Naive thymus-derived CD8-positive, alpha-beta T cell (primary cell): ENCODE measurements at regions of chr1 and their contacts with region 1.

Region 1: GRCh38 chr1:13730751-13731482 is 30.9 kb downstream of the PRDM2 start:
- DNase-seq: peak; percentile 65 to 95 (median 86)
- ATAC-seq: peak; percentile 85 to 90
- H3K4me3 Mint-ChIP-seq: peak overlapping the region; percentile 67 to 93 (median 86)
- H3K27ac Mint-ChIP-seq: peak overlapping the region; percentile 97 to 100 (median 99)
- H3K4me1 Mint-ChIP-seq: peaks cover 46 to 99% (median 92%) of the 10 kb centered on the region in 4 donors
- H3K27me3 Mint-ChIP-seq: no peaks in the 10 kb centered on the region

Region 2: GRCh38 chr1:13699936-13700520 is 30.9 kb before region 1 on chr1 and contains the start of gene PRDM2:
- POLR2A ChIA-PET with region 1: interaction called, 74 read pairs
- DNase-seq: peak; percentile 47 to 79 (median 68)
- ATAC-seq: peak; percentile 40 to 58
- H3K4me3 Mint-ChIP-seq: peak within 1 kb of the TSS; percentile 89 to 99 (median 96)
- H3K27ac Mint-ChIP-seq: peak within 1 kb of the TSS; percentile 97 to 100 (median 99)
- H3K4me1 Mint-ChIP-seq: peaks cover 27 to 60% (median 51%) of the 10 kb centered on the region in 4 donors
- H3K27me3 Mint-ChIP-seq: no peaks in the 10 kb centered on the region
- polyA plus RNA-seq, gene PRDM2: 16.8 to 23.0 (median 20.1) TPM

Region 3: DNA sequence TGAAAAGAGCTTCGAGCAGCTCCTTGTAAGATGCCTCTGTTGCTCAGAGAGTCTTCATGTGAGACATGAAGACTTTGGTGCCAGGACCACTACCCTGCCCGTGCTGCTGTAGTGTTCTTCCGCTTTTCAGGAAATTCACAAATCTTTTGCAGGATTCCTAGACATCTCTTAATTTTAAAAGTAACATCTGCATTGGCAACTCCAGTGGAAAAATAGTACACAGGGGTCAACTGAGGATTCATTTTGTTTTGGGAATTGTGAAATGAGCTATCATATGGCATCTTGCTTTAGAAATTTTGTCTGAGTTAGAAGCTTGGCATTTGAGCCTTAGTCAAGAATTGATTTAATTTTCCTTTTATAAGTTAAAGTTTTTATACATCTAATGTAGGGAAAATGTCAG is 23.8 kb before region 1 on chr1:
- POLR2A ChIA-PET with region 1: interaction called, 74 read pairs
- DNase-seq: no peak
- ATAC-seq: no peak
- H3K4me3 Mint-ChIP-seq: peak overlapping the region in 3 of 10 donors; percentile 20 to 26 (median 24)
- H3K27ac Mint-ChIP-seq: peak overlapping the region in 4 of 10 donors; percentile 17 to 98 (median 60)
- H3K4me1 Mint-ChIP-seq: peaks cover 38 to 92% (median 81%) of the 10 kb centered on the region in 4 donors
- H3K27me3 Mint-ChIP-seq: no peaks in the 10 kb centered on the region

Region 4: GRCh38 chr1:13748610-13749505 is 17.9 kb after region 1 on chr1:
- POLR2A ChIA-PET with region 1: interaction called, 103 read pairs
- DNase-seq: peak; percentile 92 to 98 (median 96)
- ATAC-seq: peak; percentile 89 to 90
- H3K4me3 Mint-ChIP-seq: peak overlapping the region; percentile 83 to 97 (median 93)
- H3K27ac Mint-ChIP-seq: peak overlapping the region; percentile 93 to 98 (median 97)
- H3K4me1 Mint-ChIP-seq: peaks cover 31 to 60% (median 59%) of the 10 kb centered on the region in 4 donors
- H3K27me3 Mint-ChIP-seq: no peaks in the 10 kb centered on the region

Region 5: GRCh38 chr1:13756557-13757315 is 25.8 kb after region 1 on chr1:
- POLR2A ChIA-PET with region 1: interaction called, 14 read pairs
- DNase-seq: no peak
- ATAC-seq: no peak
- H3K4me3 Mint-ChIP-seq: peak overlapping the region in 9 of 10 donors; percentile 16 to 68 (median 54)
- H3K27ac Mint-ChIP-seq: peak overlapping the region in 5 of 10 donors; percentile 7 to 65 (median 25)
- H3K4me1 Mint-ChIP-seq: peaks cover 44 to 96% (median 82%) of the 10 kb centered on the region in 4 donors
- H3K27me3 Mint-ChIP-seq: no peaks in the 10 kb centered on the region